IMR-90 (cell line): ENCODE measurements at regions of chr2 and their contacts with region 1.

Region 1: GRCh38 chr2:100381240-100381639 is 36.2 kb downstream of the CHST10 start:
- DNase-seq: peak; percentile 76
- ATAC-seq: peak; percentile 89
- H3K4me3 ChIP-seq: no peak overlapping the region
- H3K27ac ChIP-seq: no peak overlapping the region
- H3K4me1 ChIP-seq: no peaks in the 10 kb centered on the region
- H3K27me3 ChIP-seq: peaks cover 38% of the 10 kb centered on the region
- CTCF ChIP-seq: peak; percentile 93
- POLR2A ChIP-seq: no peak
- RAD21 ChIP-seq: peak; percentile 87

Region 2: GRCh38 chr2:99545066-99545465 is 836.2 kb before region 1 on chr2:
- CTCF ChIA-PET with region 1: no interaction called
- POLR2A ChIA-PET with region 1: no interaction called
- dilution Hi-C with region 1: no loop called
- in situ Hi-C with region 1: loop called (anchors 25 kb)
- intact Hi-C with region 1: no loop called
- DNase-seq: peak; percentile 57
- ATAC-seq: peak; percentile 82
- H3K4me3 ChIP-seq: no peak overlapping the region
- H3K27ac ChIP-seq: no peak overlapping the region
- H3K4me1 ChIP-seq: peaks cover 5% of the 10 kb centered on the region; the same call in 1 of the 2 replicates
- H3K27me3 ChIP-seq: no peaks in the 10 kb centered on the region
- CTCF ChIP-seq: no peak
- POLR2A ChIP-seq: no peak
- RAD21 ChIP-seq: no peak

Region 3: DNA sequence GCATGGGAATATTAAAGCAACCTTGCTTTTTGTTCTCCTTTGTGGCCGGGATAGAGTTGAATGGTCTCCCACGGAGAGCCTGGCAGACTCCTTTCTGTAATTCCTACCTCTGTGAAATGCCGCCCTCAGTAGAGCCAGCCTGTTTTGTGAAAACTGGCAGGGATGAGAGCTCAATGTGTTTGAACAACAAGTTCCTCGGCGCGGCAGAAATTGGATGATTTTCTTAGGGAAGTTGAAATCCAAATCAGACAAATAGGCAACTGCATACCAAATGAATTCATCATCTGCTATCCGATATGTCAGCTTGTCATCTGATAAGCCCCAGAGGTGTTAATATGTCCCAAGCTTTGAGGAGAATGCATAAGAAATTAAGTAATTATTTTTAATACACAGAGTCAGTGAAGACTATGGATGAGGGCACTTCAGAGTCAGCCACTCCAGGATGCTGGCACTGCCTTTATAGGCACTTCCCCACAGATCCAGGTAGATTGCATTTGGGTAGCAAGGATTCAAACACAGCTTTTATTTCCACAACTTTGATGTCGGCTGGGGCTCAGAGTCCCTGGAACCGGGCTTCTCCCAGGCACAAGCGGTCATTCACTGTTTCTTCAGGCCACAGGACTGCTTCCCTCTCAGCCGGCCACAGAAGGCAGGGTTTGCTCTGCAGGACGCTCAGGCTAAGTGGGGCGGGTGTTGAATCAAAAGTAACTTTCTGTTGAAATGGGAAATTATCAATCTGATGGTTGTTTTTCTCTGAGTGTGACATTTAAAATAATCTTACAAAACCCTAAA is 808.7 kb before region 1 on chr2:
- CTCF ChIA-PET with region 1: no interaction called
- POLR2A ChIA-PET with region 1: no interaction called
- dilution Hi-C with region 1: no loop called
- in situ Hi-C with region 1: no loop called
- intact Hi-C with region 1: loop called (anchors 10 kb)
- DNase-seq: no peak
- ATAC-seq: no peak
- H3K4me3 ChIP-seq: no peak overlapping the region
- H3K27ac ChIP-seq: no peak overlapping the region
- H3K4me1 ChIP-seq: peaks cover 2% of the 10 kb centered on the region; the same call in 1 of the 2 replicates
- H3K27me3 ChIP-seq: no peaks in the 10 kb centered on the region
- CTCF ChIP-seq: no peak
- POLR2A ChIP-seq: no peak
- RAD21 ChIP-seq: no peak

Region 4: GRCh38 chr2:99710721-99711120 is 670.5 kb before region 1 on chr2:
- CTCF ChIA-PET with region 1: no interaction called
- POLR2A ChIA-PET with region 1: no interaction called
- dilution Hi-C with region 1: no loop called
- in situ Hi-C with region 1: loop called (anchors 25 kb)
- intact Hi-C with region 1: no loop called
- DNase-seq: no peak
- ATAC-seq: peak; percentile 33
- H3K4me3 ChIP-seq: no peak overlapping the region
- H3K27ac ChIP-seq: peak overlapping the region; percentile 32; the same call in 1 of the 2 replicates
- H3K4me1 ChIP-seq: peaks cover 14% of the 10 kb centered on the region
- H3K27me3 ChIP-seq: no peaks in the 10 kb centered on the region
- CTCF ChIP-seq: no peak
- POLR2A ChIP-seq: no peak
- RAD21 ChIP-seq: no peak

Region 5: GRCh38 chr2:100437751-100438150 is 56.5 kb after region 1 on chr2:
- CTCF ChIA-PET with region 1: no interaction called
- POLR2A ChIA-PET with region 1: no interaction called
- dilution Hi-C with region 1: no loop called
- in situ Hi-C with region 1: no loop called
- intact Hi-C with region 1: no loop called
- DNase-seq: no peak
- ATAC-seq: no peak
- H3K4me3 ChIP-seq: no peak overlapping the region
- H3K27ac ChIP-seq: no peak overlapping the region
- H3K4me1 ChIP-seq: no peaks in the 10 kb centered on the region
- H3K27me3 ChIP-seq: peaks cover 10% of the 10 kb centered on the region
- CTCF ChIP-seq: no peak
- POLR2A ChIP-seq: no peak
- RAD21 ChIP-seq: no peak